Naive thymus-derived CD4-positive, alpha-beta T cell (primary cell): ENCODE measurements at regions of chr7 and their contacts with region 1.

Region 1: GRCh38 chr7:33050535-33051318 is 11.8 kb downstream of the NT5C3A start:
- DNase-seq: peak in 7 of 9 donors; percentile 31 to 65 (median 56)
- ATAC-seq: peak; percentile 81
- H3K4me3 ChIP-seq: no peak overlapping the region
- H3K4me3 Mint-ChIP-seq: peak overlapping the region in 3 of 10 donors; percentile 7 to 53 (median 23)
- H3K27ac ChIP-seq: no peak overlapping the region
- H3K27ac Mint-ChIP-seq: peak overlapping the region in 8 of 9 donors; percentile 2 to 79 (median 32)
- H3K4me1 ChIP-seq: peaks cover 13 to 18% of the 10 kb centered on the region in 2 donors
- H3K4me1 Mint-ChIP-seq: peaks cover 27 to 83% (median 69%) of the 10 kb centered on the region in 7 donors
- H3K27me3 ChIP-seq: no peaks in the 10 kb centered on the region
- H3K27me3 Mint-ChIP-seq: no peaks in the 10 kb centered on the region

Region 2: GRCh38 chr7:32694182-32694581 is 356.5 kb before region 1 on chr7:
- CTCF ChIA-PET with region 1: no interaction called
- POLR2A ChIA-PET with region 1: no interaction called
- intact Hi-C with region 1: loop called in 1 of 2 experiments (anchors 2 kb)
- DNase-seq: no peak
- ATAC-seq: no peak
- H3K4me3 ChIP-seq: no peak overlapping the region
- H3K4me3 Mint-ChIP-seq: no peak overlapping the region
- H3K27ac ChIP-seq: no peak overlapping the region
- H3K27ac Mint-ChIP-seq: no peak overlapping the region
- H3K4me1 ChIP-seq: no peaks in the 10 kb centered on the region
- H3K4me1 Mint-ChIP-seq: peaks cover under 1 to 11% (median 6%) of the 10 kb centered on the region in 7 donors
- H3K27me3 ChIP-seq: no peaks in the 10 kb centered on the region
- H3K27me3 Mint-ChIP-seq: peaks cover 0 to 10% (median 0%) of the 10 kb centered on the region in 5 donors

Region 3: GRCh38 chr7:32761451-32762205 is 289.1 kb before region 1 on chr7:
- CTCF ChIA-PET with region 1: no interaction called
- POLR2A ChIA-PET with region 1: no interaction called
- intact Hi-C with region 1: loop called (anchors 1 kb)
- DNase-seq: no peak
- ATAC-seq: no peak
- H3K4me3 ChIP-seq: no peak overlapping the region
- H3K4me3 Mint-ChIP-seq: peak overlapping the region in 4 of 10 donors; percentile 25 to 75 (median 45)
- H3K27ac ChIP-seq: no peak overlapping the region
- H3K27ac Mint-ChIP-seq: no peak overlapping the region
- H3K4me1 ChIP-seq: no peaks in the 10 kb centered on the region
- H3K4me1 Mint-ChIP-seq: peaks cover 3 to 19% (median 12%) of the 10 kb centered on the region in 7 donors
- H3K27me3 ChIP-seq: peaks cover 0 to 7% of the 10 kb centered on the region in 2 donors
- H3K27me3 Mint-ChIP-seq: peaks cover 32 to 68% (median 52%) of the 10 kb centered on the region in 5 donors

Region 4: DNA sequence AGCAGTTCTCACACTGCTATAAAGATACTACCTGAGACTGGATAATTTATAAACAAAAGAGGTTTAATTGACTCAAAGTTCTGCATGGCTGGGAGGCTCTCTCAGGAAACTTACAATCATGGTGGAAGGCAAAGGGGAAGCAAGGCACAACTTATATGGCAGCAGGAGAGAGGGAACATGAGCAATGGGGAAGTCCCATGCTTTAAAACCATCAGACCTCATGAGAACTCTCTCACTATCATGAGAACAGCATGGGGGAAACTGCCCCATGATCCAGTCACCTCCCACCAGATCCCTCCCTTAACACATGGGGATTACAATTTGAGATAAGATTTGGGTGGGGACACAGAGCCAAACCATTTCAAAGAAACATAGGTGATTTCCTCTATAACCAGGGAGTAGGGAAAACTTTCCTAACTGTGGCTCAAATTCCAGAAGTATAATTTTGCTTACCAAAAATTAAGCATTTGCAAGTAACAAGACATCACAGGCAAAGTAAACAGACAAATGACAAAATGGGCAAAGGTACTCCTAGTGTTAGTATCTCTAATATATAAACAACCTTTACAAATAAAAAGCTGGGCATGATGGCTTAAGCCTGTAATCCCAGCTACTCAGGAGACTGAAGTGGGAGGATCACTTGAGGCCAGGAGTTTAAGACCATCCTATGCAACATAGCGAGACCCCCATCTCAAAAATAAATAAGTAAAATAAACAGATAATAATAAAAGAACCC is 247.2 kb before region 1 on chr7:
- CTCF ChIA-PET with region 1: interaction called, 3 read pairs
- POLR2A ChIA-PET with region 1: no interaction called
- intact Hi-C with region 1: loop called in 1 of 2 experiments (anchors 1 kb)
- DNase-seq: no peak
- ATAC-seq: no peak
- H3K4me3 ChIP-seq: no peak overlapping the region
- H3K4me3 Mint-ChIP-seq: no peak overlapping the region
- H3K27ac ChIP-seq: no peak overlapping the region
- H3K27ac Mint-ChIP-seq: no peak overlapping the region
- H3K4me1 ChIP-seq: no peaks in the 10 kb centered on the region
- H3K4me1 Mint-ChIP-seq: peaks cover 0 to 3% (median 0%) of the 10 kb centered on the region in 7 donors
- H3K27me3 ChIP-seq: no peaks in the 10 kb centered on the region
- H3K27me3 Mint-ChIP-seq: peaks cover 0 to 8% (median 3%) of the 10 kb centered on the region in 5 donors

Region 5: DNA sequence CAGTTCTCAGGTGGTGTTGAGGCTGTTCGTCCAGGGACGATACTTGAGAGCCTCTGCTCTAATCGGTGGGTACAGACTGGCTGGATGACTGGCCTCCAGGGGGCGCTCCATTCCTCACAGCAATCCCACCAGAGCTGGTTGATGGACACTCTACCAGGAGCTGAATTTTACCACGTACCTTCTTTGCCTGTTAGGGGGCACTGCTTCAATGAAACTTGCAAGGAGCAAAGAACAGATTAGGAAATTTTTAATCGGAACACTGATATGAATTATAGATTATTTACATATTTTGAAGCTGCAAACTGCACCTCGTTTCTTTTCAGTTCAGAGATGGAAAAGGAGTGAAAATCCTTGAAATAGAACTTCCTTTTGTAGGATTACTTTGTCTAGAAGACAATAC is 204.0 kb before region 1 on chr7:
- CTCF ChIA-PET with region 1: interaction called, 9 read pairs
- POLR2A ChIA-PET with region 1: no interaction called
- intact Hi-C with region 1: loop called (anchors 1 to 5 kb)
- DNase-seq: peak; percentile 77 to 89 (median 86)
- ATAC-seq: peak; percentile 100
- H3K4me3 ChIP-seq: no peak overlapping the region
- H3K4me3 Mint-ChIP-seq: peak overlapping the region in 6 of 10 donors; percentile 15 to 42 (median 30)
- H3K27ac ChIP-seq: no peak overlapping the region
- H3K27ac Mint-ChIP-seq: peak overlapping the region in 1 of 9 donors; percentile 33
- H3K4me1 ChIP-seq: peaks cover 7% of the 10 kb centered on the region in 2 donors
- H3K4me1 Mint-ChIP-seq: peaks cover 6 to 10% (median 9%) of the 10 kb centered on the region in 7 donors
- H3K27me3 ChIP-seq: peaks cover 0 to under 1% of the 10 kb centered on the region in 2 donors
- H3K27me3 Mint-ChIP-seq: peaks cover 12 to 44% (median 23%) of the 10 kb centered on the region in 5 donors

Region 6: GRCh38 chr7:33062782-33063443 is 12.2 kb after region 1 on chr7:
- CTCF ChIA-PET with region 1: interaction called, 5 read pairs
- POLR2A ChIA-PET with region 1: interaction called, 11 read pairs
- intact Hi-C with region 1: loop called (anchors 1 kb)
- DNase-seq: peak; percentile 90 to 95 (median 93)
- ATAC-seq: peak; percentile 97
- H3K4me3 ChIP-seq: peak overlapping the region; percentile 96
- H3K4me3 Mint-ChIP-seq: peak overlapping the region; percentile 91 to 98 (median 96)
- H3K27ac ChIP-seq: peak overlapping the region; percentile 82
- H3K27ac Mint-ChIP-seq: peak overlapping the region; percentile 92 to 99 (median 96)
- H3K4me1 ChIP-seq: peaks cover 23 to 32% of the 10 kb centered on the region in 2 donors
- H3K4me1 Mint-ChIP-seq: peaks cover 20 to 50% (median 39%) of the 10 kb centered on the region in 7 donors
- H3K27me3 ChIP-seq: no peaks in the 10 kb centered on the region
- H3K27me3 Mint-ChIP-seq: peaks cover 0 to 14% (median 0%) of the 10 kb centered on the region in 5 donors